MCF 10A (cell line): ENCODE measurements at regions of chr9 and their contacts with region 1.

Region 1: DNA sequence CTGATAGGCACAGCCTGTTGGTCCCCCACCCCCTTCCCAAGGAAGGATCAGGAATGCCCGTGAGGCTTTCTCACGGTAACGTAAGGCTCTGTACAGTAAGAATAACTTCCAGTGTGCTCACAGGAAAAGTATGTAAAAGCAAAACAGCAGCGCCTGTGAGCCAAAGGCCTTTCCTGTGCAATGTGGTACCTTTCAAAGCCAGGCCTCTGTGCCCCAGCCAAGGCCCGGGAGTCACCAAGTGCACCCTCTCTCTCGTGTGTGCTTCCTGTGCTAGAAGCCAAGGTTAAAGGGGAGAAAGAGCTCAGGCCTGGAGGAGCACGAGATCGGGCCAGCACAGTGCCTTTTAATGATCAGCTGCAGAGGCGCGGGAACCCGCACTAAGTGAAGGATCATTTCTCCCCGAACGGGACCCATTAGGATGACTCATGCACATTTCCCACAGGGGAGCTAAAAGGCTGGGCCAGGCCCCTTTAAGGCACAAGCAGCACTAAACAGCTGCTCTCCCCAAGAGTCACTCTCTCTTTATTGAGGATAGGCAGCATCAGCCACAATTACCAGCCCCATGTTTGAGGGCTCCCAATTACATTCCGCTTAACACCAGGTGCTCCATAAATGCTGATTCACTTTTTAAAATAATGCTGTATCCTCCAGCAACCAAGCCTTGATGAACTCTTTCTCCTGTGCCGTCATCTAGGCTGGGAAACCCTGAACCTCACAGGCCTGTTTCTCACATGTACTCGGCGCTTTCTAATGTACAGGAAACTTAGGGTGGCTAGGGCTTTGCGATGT is 42.8 kb downstream of the SHB start:
- DNase-seq: peak; percentile 88
- H3K4me3 Mint-ChIP-seq: peak overlapping the region; percentile 38
- H3K27ac Mint-ChIP-seq: peak overlapping the region; percentile 83
- H3K4me1 Mint-ChIP-seq: peaks cover 44% of the 10 kb centered on the region
- H3K27me3 Mint-ChIP-seq: no peaks in the 10 kb centered on the region
- CTCF ChIP-seq: no peak

Region 2: DNA sequence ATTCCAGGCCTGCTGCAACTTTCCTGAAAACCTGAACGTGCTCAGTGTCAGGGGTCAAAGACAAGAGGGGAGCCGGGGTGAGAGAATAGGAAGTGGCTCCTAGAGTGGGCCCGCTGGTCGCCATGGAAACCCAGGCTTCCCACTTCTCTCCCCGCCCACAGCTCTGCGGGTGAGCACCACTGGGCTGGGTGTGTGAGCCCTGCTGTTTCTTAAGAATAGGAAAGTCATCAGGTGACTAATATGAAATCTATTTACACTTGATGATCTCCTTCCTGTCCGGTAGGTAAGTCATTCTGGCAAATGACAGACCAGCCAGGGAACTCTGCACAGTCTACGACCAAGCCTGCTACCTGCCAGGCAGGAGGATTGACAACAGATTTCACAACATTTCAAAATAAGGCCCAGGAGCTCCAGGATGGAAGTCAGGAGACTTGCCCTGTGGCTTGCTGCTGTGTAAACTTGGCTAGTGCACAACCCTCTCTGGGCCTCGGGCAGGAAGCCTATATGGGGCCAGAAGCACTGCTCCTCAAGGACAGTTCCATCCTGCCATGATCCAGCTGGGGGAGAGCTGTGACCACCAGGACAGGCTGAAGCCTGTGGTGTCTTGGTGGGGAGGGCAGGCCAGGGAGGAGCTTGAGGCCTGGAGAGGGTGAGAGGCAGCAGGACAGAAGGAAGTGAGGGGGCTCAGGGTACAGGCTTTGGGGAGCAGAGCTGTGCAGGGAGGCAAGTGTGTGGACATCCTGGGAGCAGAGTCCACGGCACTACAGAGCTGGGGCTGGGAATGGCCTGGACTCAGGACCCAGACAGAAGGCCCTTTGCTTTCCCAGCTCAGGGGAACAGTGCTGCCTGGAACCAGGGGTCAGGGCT is 17.8 kb before region 1 on chr9:
- CTCF ChIA-PET with region 1: interaction called, 3 read pairs
- POLR2A ChIA-PET with region 1: interaction called, 57 read pairs
- intact Hi-C with region 1: no loop called
- DNase-seq: peak; percentile 93
- H3K4me3 Mint-ChIP-seq: no peak overlapping the region
- H3K27ac Mint-ChIP-seq: peak overlapping the region; percentile 99
- H3K4me1 Mint-ChIP-seq: peaks cover 44% of the 10 kb centered on the region
- H3K27me3 Mint-ChIP-seq: no peaks in the 10 kb centered on the region
- CTCF ChIP-seq: no peak